ENCODE measurements at regions of chr12 and their contacts with region 1.

Region 1: DNA sequence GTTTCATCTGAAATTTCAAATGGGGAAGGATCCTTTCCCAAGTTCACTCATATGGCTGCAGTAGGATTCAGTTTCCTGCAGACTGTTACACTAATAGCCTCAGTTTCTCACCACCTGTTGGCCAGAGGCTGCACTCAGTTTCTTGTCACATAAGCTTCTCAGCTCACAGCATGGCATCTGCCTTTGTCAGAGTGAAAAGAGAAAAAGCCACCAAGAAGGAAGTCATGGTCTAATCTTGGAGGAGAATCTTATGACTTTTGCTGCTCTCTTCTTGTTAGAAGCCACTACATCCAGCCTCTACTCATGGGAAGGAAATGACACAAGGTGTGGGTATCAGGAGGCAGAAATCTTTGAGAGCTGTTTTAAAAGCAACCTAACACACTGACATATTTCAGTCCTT is 39.4 kb upstream of the BTG1 start:
- DNase-seq: no peak
- ATAC-seq: peak; percentile 54
- H3K4me3 Mint-ChIP-seq: peak overlapping the region; percentile 76
- H3K27ac Mint-ChIP-seq: peak overlapping the region; percentile 95
- H3K4me1 Mint-ChIP-seq: peaks cover 57% of the 10 kb centered on the region
- H3K27me3 Mint-ChIP-seq: no peaks in the 10 kb centered on the region
- CTCF ChIP-seq: no peak

Region 2: GRCh38 chr12:91804533-91804932 is 380.5 kb before region 1 on chr12:
- CTCF ChIA-PET with region 1: no interaction called
- POLR2A ChIA-PET with region 1: no interaction called
- intact Hi-C with region 1: no loop called
- DNase-seq: no peak
- ATAC-seq: no peak
- H3K4me3 Mint-ChIP-seq: no peak overlapping the region
- H3K27ac Mint-ChIP-seq: no peak overlapping the region
- H3K4me1 Mint-ChIP-seq: no peaks in the 10 kb centered on the region
- H3K27me3 Mint-ChIP-seq: peaks cover 2% of the 10 kb centered on the region
- CTCF ChIP-seq: no peak

Region 3: GRCh38 chr12:92059976-92060375 is 125.1 kb before region 1 on chr12:
- CTCF ChIA-PET with region 1: no interaction called
- POLR2A ChIA-PET with region 1: no interaction called
- intact Hi-C with region 1: no loop called
- DNase-seq: no peak
- ATAC-seq: no peak
- H3K4me3 Mint-ChIP-seq: no peak overlapping the region
- H3K27ac Mint-ChIP-seq: no peak overlapping the region
- H3K4me1 Mint-ChIP-seq: peaks cover 70% of the 10 kb centered on the region
- H3K27me3 Mint-ChIP-seq: no peaks in the 10 kb centered on the region
- CTCF ChIP-seq: no peak

Region 4: DNA sequence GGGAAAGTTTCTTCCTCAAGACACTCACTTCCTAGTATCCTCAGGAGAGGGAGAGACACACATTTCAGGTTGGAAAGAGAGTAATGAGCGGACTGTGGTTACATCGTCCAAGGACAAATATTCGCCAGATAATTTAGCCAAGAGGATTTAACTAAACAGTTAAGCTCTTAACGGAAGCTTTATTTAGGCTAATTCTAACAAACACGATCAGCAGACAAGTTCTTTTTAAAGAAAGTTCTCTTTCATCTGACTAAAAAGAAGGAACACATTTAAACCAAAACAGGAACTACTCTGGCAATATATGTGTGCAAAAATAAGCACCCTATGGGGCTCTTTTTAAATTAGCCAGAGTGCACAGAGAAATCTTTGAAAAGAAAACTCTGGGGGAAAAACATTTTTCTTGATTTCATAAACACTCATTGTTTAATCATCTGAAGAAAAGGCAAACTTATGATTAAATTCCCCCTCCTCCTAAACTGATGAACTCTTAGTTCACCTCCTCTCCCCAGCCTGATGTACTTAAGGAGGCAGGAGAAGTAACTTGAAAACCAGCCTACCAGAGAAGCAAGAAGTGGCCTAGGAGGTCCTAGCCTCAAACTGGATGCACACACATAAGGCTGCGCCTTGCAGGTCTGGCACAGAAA is 26.1 kb before region 1 on chr12:
- CTCF ChIA-PET with region 1: no interaction called
- POLR2A ChIA-PET with region 1: interaction called, 3 read pairs
- intact Hi-C with region 1: loop called (anchors 2 kb)
- DNase-seq: no peak
- ATAC-seq: peak; percentile 65
- H3K4me3 Mint-ChIP-seq: peak overlapping the region; percentile 76
- H3K27ac Mint-ChIP-seq: peak overlapping the region; percentile 96
- H3K4me1 Mint-ChIP-seq: peaks cover 93% of the 10 kb centered on the region
- H3K27me3 Mint-ChIP-seq: no peaks in the 10 kb centered on the region
- CTCF ChIP-seq: no peak

Region 5: GRCh38 chr12:92208613-92209121 is 23.6 kb after region 1 on chr12:
- CTCF ChIA-PET with region 1: no interaction called
- POLR2A ChIA-PET with region 1: no interaction called
- intact Hi-C with region 1: loop called (anchors 2 kb)
- DNase-seq: no peak
- ATAC-seq: peak; percentile 84
- H3K4me3 Mint-ChIP-seq: peak overlapping the region; percentile 61
- H3K27ac Mint-ChIP-seq: peak overlapping the region; percentile 70
- H3K4me1 Mint-ChIP-seq: peaks cover 28% of the 10 kb centered on the region
- H3K27me3 Mint-ChIP-seq: no peaks in the 10 kb centered on the region
- CTCF ChIP-seq: no peak

Region 6: DNA sequence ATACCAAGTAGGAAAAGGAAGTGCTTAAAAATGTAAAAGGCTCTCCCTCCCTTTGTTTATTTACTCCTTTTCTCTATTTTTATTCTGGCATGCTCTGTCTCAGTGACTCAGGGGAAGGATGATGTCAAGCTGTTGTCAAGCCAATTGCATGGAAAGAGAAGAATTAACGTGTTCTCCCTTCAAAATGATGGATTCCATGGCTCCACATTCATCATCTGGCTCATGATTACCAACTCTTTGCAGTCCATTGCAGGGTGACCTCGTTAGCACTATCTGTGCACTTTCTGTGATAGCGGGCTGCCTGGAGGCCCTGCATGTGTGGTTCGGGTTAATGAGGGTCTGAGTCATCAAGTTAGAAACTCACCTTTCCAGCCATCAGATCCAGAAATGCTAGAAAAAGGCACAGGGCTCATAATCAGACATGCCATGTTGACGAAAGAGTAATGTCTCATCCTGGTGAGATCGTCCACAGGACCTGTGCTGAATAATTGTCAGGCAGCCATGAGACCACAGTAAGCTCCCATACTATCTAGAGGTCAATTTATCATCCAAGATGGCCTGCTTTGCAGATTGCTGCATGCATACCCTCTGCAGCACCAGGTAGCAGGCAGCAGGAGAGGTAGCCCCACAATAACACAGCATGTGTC is 39.8 kb after region 1 on chr12:
- CTCF ChIA-PET with region 1: no interaction called
- POLR2A ChIA-PET with region 1: no interaction called
- intact Hi-C with region 1: loop called (anchors 5 kb)
- DNase-seq: no peak
- ATAC-seq: no peak
- H3K4me3 Mint-ChIP-seq: no peak overlapping the region
- H3K27ac Mint-ChIP-seq: no peak overlapping the region
- H3K4me1 Mint-ChIP-seq: no peaks in the 10 kb centered on the region
- H3K27me3 Mint-ChIP-seq: no peaks in the 10 kb centered on the region
- CTCF ChIP-seq: no peak